CD4-positive, alpha-beta T cell (primary cell): ENCODE measurements at regions of chr1 and their contacts with region 1.

Region 1: GRCh38 chr1:161225534-161226319 is at the start of gene TOMM40L:
- DNase-seq: peak; percentile 74 to 98 (median 82)
- ATAC-seq: peak; percentile 95
- H3K4me3 ChIP-seq: peak within 1 kb of the TSS; percentile 84
- H3K4me3 Mint-ChIP-seq: peak within 1 kb of the TSS; percentile 98
- H3K27ac ChIP-seq: peak within 1 kb of the TSS; percentile 5 to 52
- H3K27ac Mint-ChIP-seq: peak within 1 kb of the TSS; percentile 83
- H3K4me1 ChIP-seq: peaks cover 34% of the 10 kb centered on the region
- H3K4me1 Mint-ChIP-seq: peaks cover 39% of the 10 kb centered on the region
- H3K27me3 ChIP-seq: no peaks in the 10 kb centered on the region
- H3K27me3 Mint-ChIP-seq: no peaks in the 10 kb centered on the region
- CTCF ChIP-seq: peak; percentile 59
- total RNA-seq, gene TOMM40L: 3.2 to 4.1 TPM

Region 2: GRCh38 chr1:161153679-161154426 is 71.9 kb before region 1 on chr1 and contains the start of gene UFC1:
- CTCF ChIA-PET with region 1: interaction called, 5 read pairs
- POLR2A ChIA-PET with region 1: interaction called, 14 read pairs
- intact Hi-C with region 1: no loop called
- DNase-seq: peak; percentile 67 to 96 (median 76)
- ATAC-seq: peak; percentile 91
- H3K4me3 ChIP-seq: peak within 1 kb of the TSS; percentile 97
- H3K4me3 Mint-ChIP-seq: peak within 1 kb of the TSS; percentile 98
- H3K27ac ChIP-seq: peak within 1 kb of the TSS; percentile 96 to 99
- H3K27ac Mint-ChIP-seq: peak within 1 kb of the TSS; percentile 99
- H3K4me1 ChIP-seq: peaks cover 19% of the 10 kb centered on the region
- H3K4me1 Mint-ChIP-seq: peaks cover 42% of the 10 kb centered on the region
- H3K27me3 ChIP-seq: no peaks in the 10 kb centered on the region
- H3K27me3 Mint-ChIP-seq: no peaks in the 10 kb centered on the region
- CTCF ChIP-seq: no peak
- total RNA-seq, gene UFC1: 96.6 to 97.8 TPM

Region 3: DNA sequence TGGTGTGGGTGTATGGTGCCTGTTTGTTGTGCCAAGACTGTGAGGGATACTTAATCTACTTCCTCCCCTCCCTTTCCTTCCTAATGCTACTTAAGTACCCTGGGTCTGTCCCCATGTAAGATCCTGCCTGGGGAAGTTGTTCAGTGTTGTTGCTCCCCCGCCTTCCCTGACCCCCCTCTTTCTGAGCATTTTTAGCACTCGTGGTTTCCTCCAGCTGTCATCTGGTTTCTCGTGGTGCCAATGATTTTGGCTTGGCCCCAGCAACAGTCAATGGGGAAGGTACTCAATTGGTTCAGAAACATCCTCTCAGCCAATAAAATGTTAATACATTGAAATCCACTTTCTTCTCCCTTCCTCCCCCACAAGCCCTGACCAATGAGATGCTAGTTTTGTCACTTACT is 40.4 kb before region 1 on chr1:
- CTCF ChIA-PET with region 1: interaction called, 16 read pairs
- POLR2A ChIA-PET with region 1: interaction called, 28 read pairs
- intact Hi-C with region 1: no loop called
- DNase-seq: peak; percentile 59 to 96 (median 74)
- ATAC-seq: peak; percentile 78
- H3K4me3 ChIP-seq: peak overlapping the region; percentile 41
- H3K4me3 Mint-ChIP-seq: peak overlapping the region; percentile 80
- H3K27ac ChIP-seq: peak overlapping the region; percentile 61 to 77
- H3K27ac Mint-ChIP-seq: peak overlapping the region; percentile 97
- H3K4me1 ChIP-seq: peaks cover 90% of the 10 kb centered on the region
- H3K4me1 Mint-ChIP-seq: peaks cover 74% of the 10 kb centered on the region
- H3K27me3 ChIP-seq: no peaks in the 10 kb centered on the region
- H3K27me3 Mint-ChIP-seq: no peaks in the 10 kb centered on the region
- CTCF ChIP-seq: no peak

Region 4: DNA sequence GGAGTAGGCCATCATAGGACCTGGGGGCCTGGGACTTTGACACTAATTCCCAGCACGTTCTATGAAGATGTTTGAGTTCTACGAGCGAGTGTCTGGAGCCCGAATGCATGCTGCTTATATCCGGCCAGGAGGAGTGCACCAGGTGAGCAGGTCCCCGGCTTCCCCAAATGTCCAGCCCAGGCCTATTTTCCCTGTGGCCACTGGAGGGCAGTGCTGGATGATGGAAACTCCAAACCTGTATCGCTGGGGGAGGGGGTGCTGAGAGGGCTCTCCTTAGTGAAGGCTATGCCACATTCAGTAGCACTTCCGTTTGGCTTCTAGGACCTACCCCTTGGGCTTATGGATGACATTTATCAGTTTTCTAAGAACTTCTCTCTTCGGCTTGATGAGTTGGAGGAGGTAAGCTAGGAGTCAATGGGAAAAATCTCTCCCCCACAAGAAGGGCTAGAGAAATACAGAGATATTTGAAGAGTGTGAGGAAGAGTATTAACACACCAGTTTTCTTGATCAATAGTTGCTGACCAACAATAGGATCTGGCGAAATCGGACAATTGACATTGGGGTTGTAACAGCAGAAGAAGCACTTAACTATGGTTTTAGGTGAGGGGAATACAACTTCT is 15.8 kb before region 1 on chr1:
- CTCF ChIA-PET with region 1: interaction called, 14 read pairs
- POLR2A ChIA-PET with region 1: interaction called, 95 read pairs
- intact Hi-C with region 1: loop called in 1 of 2 experiments (anchors 1 kb)
- DNase-seq: peak; percentile 55 to 87 (median 66)
- ATAC-seq: peak; percentile 98
- H3K4me3 ChIP-seq: no peak overlapping the region
- H3K4me3 Mint-ChIP-seq: no peak overlapping the region
- H3K27ac ChIP-seq: no peak overlapping the region
- H3K27ac Mint-ChIP-seq: peak overlapping the region; percentile 12
- H3K4me1 ChIP-seq: peaks cover 22% of the 10 kb centered on the region
- H3K4me1 Mint-ChIP-seq: peaks cover 39% of the 10 kb centered on the region
- H3K27me3 ChIP-seq: no peaks in the 10 kb centered on the region
- H3K27me3 Mint-ChIP-seq: no peaks in the 10 kb centered on the region
- CTCF ChIP-seq: peak; percentile 84

Region 5: GRCh38 chr1:161314201-161314981 is 88.7 kb after region 1 on chr1 and contains the start of gene SDHC:
- CTCF ChIA-PET with region 1: interaction called, 8 read pairs
- POLR2A ChIA-PET with region 1: interaction called, 25 read pairs
- intact Hi-C with region 1: no loop called
- DNase-seq: peak; percentile 84 to 96 (median 90)
- ATAC-seq: peak; percentile 98
- H3K4me3 ChIP-seq: peak within 1 kb of the TSS; percentile 90
- H3K4me3 Mint-ChIP-seq: peak within 1 kb of the TSS; percentile 98
- H3K27ac ChIP-seq: peak within 1 kb of the TSS; percentile 94 to 97
- H3K27ac Mint-ChIP-seq: peak within 1 kb of the TSS; percentile 100
- H3K4me1 ChIP-seq: peaks cover 18% of the 10 kb centered on the region
- H3K4me1 Mint-ChIP-seq: peaks cover 30% of the 10 kb centered on the region
- H3K27me3 ChIP-seq: no peaks in the 10 kb centered on the region
- H3K27me3 Mint-ChIP-seq: no peaks in the 10 kb centered on the region
- CTCF ChIP-seq: no peak
- total RNA-seq, gene SDHC: 33.0 to 37.2 TPM

Region 6: GRCh38 chr1:161749509-161750407 is 524.0 kb after region 1 on chr1 and contains the start of gene DUSP12:
- CTCF ChIA-PET with region 1: no interaction called
- POLR2A ChIA-PET with region 1: no interaction called
- intact Hi-C with region 1: loop called (anchors 10 kb)
- DNase-seq: peak; percentile 75 to 94 (median 82)
- ATAC-seq: peak; percentile 96
- H3K4me3 ChIP-seq: peak within 1 kb of the TSS; percentile 95
- H3K4me3 Mint-ChIP-seq: peak within 1 kb of the TSS; percentile 99
- H3K27ac ChIP-seq: peak within 1 kb of the TSS; percentile 70 to 73
- H3K27ac Mint-ChIP-seq: peak within 1 kb of the TSS; percentile 91
- H3K4me1 ChIP-seq: peaks cover 20% of the 10 kb centered on the region
- H3K4me1 Mint-ChIP-seq: peaks cover 43% of the 10 kb centered on the region
- H3K27me3 ChIP-seq: no peaks in the 10 kb centered on the region
- H3K27me3 Mint-ChIP-seq: peaks cover 8% of the 10 kb centered on the region
- CTCF ChIP-seq: no peak
- total RNA-seq, gene DUSP12: 20.3 to 23.0 TPM